Dendritic cell treated with granulocyte-macrophage colony-stimulating factor and Interleukin-4, amounts not matched to agents 40 ng/mL and 50 ng/mL, for 4 days (primary cell): ENCODE measurements at regions of chr5 and their contacts with region 1.

Region 1: DNA sequence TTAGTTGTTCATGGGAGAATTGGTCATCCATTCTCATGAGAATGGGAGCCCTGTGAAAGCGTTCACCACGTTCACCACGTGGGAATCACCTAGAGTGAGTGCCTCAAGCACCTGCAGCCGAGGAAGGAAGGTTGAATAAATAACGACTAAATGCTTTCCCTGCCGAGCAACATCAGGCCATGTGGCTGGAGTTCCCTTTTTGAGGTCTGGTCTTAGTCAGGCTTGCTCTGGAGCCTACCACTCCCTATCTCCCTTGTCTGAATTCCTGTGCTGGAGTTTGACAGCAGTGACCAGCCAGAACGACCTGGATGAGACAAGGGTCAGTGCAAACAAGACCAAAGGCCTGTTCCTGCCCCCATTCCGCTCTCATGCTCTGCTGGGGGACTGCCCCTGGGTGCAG is 28.5 kb downstream of the KCNMB1 start:
- H3K4me3 Mint-ChIP-seq: no peak overlapping the region
- H3K27ac Mint-ChIP-seq: peak overlapping the region; percentile 98
- H3K4me1 Mint-ChIP-seq: peaks cover 88% of the 10 kb centered on the region
- H3K27me3 Mint-ChIP-seq: no peaks in the 10 kb centered on the region

Region 2: DNA sequence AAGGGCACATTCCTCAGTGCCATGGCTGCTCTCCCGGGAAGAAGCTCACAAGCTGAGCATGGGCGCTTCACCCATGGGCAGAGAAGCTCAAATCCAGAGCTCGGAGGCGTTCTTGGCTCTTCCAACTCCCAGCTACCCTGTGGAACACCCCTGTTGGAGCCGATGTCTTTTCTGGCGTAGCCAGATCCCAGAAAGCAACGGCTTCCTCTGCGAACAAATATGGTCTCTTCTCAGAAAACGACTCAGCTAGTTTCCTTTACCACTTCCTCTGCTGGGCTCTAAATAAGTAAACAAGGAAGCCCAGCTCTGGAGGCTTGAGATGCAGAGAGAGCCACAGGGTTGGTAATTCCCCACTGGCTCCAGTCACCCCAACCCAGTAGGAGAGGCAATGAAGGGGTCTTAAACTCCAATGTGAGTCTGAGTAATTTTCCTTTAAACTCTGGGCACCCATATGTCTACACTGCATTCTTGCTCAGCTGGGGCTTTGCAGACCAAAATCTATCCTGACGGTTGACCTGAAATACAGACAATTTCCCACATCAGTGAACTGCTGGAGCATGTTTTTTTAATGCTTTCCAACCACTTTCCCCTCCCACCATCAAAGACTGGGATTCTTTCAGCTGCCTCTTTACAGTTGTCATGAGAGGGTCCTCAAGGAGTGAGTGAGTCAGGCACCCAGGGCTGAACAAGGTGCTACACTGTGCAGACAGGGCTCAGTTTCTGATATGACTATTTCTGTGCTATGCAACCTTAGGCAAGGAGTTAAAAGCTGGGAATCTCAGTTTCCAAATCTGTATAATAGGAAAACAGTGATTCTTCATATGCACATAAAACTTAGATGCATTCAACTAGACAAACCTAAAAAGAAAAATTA is 62.9 kb before region 1 on chr5 and contains the start of gene LCP2:
- intact Hi-C with region 1: loop called (anchors 2 kb)
- H3K4me3 Mint-ChIP-seq: peak within 1 kb of the TSS; percentile 99
- H3K27ac Mint-ChIP-seq: peak within 1 kb of the TSS; percentile 95
- H3K4me1 Mint-ChIP-seq: peaks cover 82% of the 10 kb centered on the region
- H3K27me3 Mint-ChIP-seq: no peaks in the 10 kb centered on the region